Activated CD4-positive, alpha-beta memory T cell treated with anti-CD3 and anti-CD28 coated beads for 36 hours (primary cell): ENCODE measurements at regions of chr17 and their contacts with region 1.

Region 1: DNA sequence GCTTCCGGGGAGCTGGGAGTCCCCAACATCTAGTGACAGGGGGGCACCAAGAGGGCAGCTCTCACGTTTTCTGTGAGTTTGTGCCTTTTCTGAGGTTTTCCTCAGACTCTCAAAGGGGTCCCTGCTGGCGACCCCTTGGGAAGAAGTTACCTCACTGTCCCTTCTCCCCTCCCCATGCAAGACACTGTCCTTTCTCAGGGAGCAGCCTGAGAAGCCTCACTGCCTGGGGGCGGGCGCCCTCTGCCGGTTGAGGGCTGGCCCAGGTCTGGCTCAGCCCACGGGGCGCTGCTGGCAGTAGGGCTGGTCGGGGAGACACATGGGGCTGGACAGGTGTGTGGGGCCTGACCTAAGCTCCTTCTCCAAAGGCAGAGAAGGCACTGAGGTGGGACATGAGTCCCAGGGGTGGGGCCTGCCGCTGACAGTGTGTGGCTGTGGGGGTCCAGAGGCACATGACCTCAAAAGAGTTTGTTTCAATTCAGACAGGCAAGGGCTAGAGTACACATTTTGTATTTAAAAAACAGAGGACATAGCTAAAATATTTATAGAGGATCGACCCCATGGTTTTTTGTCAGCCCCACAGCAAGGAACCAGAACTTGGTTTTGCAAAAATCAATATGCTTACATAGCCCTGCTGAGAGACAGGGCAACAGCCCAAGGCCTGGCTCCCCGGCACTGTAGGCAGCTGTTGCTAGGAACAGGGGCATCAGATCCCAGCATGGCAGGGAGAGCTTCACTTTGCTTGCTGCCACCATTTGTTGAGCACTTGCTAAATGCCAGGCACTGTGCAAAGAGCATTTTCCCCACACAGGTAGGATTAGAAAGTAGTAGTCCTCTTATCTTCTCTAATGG is 18.5 kb upstream of the ALDH3A1 start:
- DNase-seq: peak; percentile 86
- H3K4me3 Mint-ChIP-seq: no peak overlapping the region
- H3K27ac Mint-ChIP-seq: peak overlapping the region; percentile 5
- H3K4me1 Mint-ChIP-seq: peaks cover 46% of the 10 kb centered on the region
- H3K27me3 Mint-ChIP-seq: no peaks in the 10 kb centered on the region

Region 2: GRCh38 chr17:19513897-19514488 is 252.7 kb before region 1 on chr17:
- CTCF ChIA-PET with region 1: interaction called, 233 read pairs
- POLR2A ChIA-PET with region 1: no interaction called
- intact Hi-C with region 1: loop called (anchors 1 kb)
- DNase-seq: peak; percentile 76
- H3K4me3 Mint-ChIP-seq: no peak overlapping the region
- H3K27ac Mint-ChIP-seq: no peak overlapping the region
- H3K4me1 Mint-ChIP-seq: peaks cover 3% of the 10 kb centered on the region
- H3K27me3 Mint-ChIP-seq: no peaks in the 10 kb centered on the region

Region 3: DNA sequence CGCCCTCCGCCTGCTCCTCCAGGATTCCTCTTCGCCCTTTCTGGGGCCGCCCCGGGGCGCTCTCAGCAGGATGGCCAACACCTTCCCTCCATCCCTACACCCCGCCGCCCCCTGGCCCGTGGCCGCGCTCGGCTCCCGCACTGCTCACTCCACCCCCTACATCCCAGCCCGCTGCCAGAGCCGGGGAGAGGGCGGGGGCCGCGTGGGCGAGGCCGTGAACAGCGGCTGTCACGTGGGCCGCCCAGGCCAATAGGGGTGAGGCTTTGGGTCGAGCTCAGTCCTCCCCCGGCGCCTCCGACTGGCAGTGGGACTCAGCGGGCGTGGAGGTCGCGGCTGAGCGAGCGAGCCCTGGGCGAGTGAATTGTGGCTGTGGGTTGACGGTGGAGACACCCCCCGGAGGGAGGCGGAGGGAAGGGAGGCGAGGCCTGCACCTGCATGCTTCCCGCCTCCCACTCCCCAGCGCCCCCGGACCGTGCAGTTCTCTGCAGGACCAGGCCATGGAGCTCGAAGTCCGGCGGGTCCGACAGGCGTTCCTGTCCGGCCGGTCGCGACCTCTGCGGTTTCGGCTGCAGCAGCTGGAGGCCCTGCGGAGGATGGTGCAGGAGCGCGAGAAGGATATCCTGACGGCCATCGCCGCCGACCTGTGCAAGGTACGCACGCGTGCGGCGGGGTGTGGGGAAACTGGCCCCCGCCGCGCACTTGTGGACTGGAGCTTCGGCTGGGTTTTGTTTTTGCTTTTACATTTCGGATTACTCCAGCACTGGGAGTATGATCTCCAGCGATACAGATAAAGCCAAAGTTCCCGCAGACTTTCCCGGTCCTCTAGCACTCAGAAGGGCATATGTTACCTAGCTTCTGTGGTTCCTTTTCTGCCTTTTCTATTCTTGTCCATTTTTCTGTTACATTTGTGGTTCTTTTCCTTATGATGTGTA is 117.9 kb before region 1 on chr17 and contains the start of gene ALDH3A2:
- CTCF ChIA-PET with region 1: interaction called, 44 read pairs
- POLR2A ChIA-PET with region 1: interaction called, 3 read pairs
- intact Hi-C with region 1: loop called (anchors 2 kb)
- DNase-seq: peak; percentile 97
- H3K4me3 Mint-ChIP-seq: peak within 1 kb of the TSS; percentile 91
- H3K27ac Mint-ChIP-seq: peak within 1 kb of the TSS; percentile 86
- H3K4me1 Mint-ChIP-seq: peaks cover 36% of the 10 kb centered on the region
- H3K27me3 Mint-ChIP-seq: no peaks in the 10 kb centered on the region
- total RNA-seq, gene ALDH3A2: 27.3 to 35.7 TPM

Region 4: GRCh38 chr17:19753049-19753444 is 13.6 kb before region 1 on chr17:
- CTCF ChIA-PET with region 1: interaction called, 72 read pairs
- POLR2A ChIA-PET with region 1: no interaction called
- intact Hi-C with region 1: no loop called
- DNase-seq: no peak
- H3K4me3 Mint-ChIP-seq: no peak overlapping the region
- H3K27ac Mint-ChIP-seq: no peak overlapping the region
- H3K4me1 Mint-ChIP-seq: peaks cover 9% of the 10 kb centered on the region
- H3K27me3 Mint-ChIP-seq: peaks cover 10% of the 10 kb centered on the region

Region 5: GRCh38 chr17:19812407-19812806 is 45.8 kb after region 1 on chr17:
- CTCF ChIA-PET with region 1: interaction called, 8 read pairs
- POLR2A ChIA-PET with region 1: no interaction called
- intact Hi-C with region 1: loop called (anchors 5 kb)
- DNase-seq: peak; percentile 16
- H3K4me3 Mint-ChIP-seq: no peak overlapping the region
- H3K27ac Mint-ChIP-seq: no peak overlapping the region
- H3K4me1 Mint-ChIP-seq: no peaks in the 10 kb centered on the region
- H3K27me3 Mint-ChIP-seq: no peaks in the 10 kb centered on the region